MCF 10A (cell line): ENCODE measurements at regions of chr17 and their contacts with region 1.

Region 1: GRCh38 chr17:4852567-4853207 is 19.5 kb downstream of the MINK1 start:
- DNase-seq: peak; percentile 63
- H3K4me3 Mint-ChIP-seq: peak overlapping the region; percentile 2
- H3K27ac Mint-ChIP-seq: peak overlapping the region; percentile 89
- H3K4me1 Mint-ChIP-seq: peaks cover 75% of the 10 kb centered on the region
- H3K27me3 Mint-ChIP-seq: no peaks in the 10 kb centered on the region
- CTCF ChIP-seq: no peak

Region 2: DNA sequence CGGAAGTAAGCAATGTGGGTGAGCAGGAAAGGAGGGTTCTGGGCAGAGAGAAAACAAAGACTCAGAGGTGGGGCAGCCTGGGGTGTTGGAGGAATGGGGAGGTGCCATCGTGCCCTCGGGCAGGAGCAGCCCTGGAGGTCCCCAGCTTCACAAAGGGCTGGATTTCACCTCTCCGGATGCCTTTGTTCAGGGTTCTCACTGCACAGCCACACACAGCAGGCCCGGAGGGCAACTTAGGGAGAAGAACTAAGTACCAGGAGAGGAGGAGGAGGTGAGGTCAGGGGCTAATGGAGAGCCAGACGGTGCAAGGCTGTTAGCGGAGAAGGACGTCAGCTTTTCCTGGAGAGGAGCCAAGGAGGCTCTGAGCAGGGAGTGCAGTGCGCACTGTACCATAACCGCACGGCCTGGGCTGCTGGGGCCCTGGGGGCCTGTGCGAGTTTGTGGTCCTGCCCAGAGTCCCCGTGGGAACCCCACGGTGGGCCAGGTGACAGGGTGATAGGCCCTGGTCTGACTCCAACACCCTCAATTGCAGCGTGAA is 132.9 kb before region 1 on chr17:
- CTCF ChIA-PET with region 1: no interaction called
- POLR2A ChIA-PET with region 1: no interaction called
- intact Hi-C with region 1: no loop called
- DNase-seq: no peak
- H3K4me3 Mint-ChIP-seq: no peak overlapping the region
- H3K27ac Mint-ChIP-seq: no peak overlapping the region
- H3K4me1 Mint-ChIP-seq: peaks cover 14% of the 10 kb centered on the region
- H3K27me3 Mint-ChIP-seq: no peaks in the 10 kb centered on the region
- CTCF ChIP-seq: no peak

Region 3: GRCh38 chr17:4796553-4796921 is 56.1 kb before region 1 on chr17:
- CTCF ChIA-PET with region 1: interaction called, 3 read pairs
- POLR2A ChIA-PET with region 1: interaction called, 14 read pairs
- intact Hi-C with region 1: no loop called
- DNase-seq: peak; percentile 20
- H3K4me3 Mint-ChIP-seq: peak overlapping the region; percentile 96
- H3K27ac Mint-ChIP-seq: peak overlapping the region; percentile 88
- H3K4me1 Mint-ChIP-seq: peaks cover 4% of the 10 kb centered on the region
- H3K27me3 Mint-ChIP-seq: no peaks in the 10 kb centered on the region
- CTCF ChIP-seq: no peak

Region 4: DNA sequence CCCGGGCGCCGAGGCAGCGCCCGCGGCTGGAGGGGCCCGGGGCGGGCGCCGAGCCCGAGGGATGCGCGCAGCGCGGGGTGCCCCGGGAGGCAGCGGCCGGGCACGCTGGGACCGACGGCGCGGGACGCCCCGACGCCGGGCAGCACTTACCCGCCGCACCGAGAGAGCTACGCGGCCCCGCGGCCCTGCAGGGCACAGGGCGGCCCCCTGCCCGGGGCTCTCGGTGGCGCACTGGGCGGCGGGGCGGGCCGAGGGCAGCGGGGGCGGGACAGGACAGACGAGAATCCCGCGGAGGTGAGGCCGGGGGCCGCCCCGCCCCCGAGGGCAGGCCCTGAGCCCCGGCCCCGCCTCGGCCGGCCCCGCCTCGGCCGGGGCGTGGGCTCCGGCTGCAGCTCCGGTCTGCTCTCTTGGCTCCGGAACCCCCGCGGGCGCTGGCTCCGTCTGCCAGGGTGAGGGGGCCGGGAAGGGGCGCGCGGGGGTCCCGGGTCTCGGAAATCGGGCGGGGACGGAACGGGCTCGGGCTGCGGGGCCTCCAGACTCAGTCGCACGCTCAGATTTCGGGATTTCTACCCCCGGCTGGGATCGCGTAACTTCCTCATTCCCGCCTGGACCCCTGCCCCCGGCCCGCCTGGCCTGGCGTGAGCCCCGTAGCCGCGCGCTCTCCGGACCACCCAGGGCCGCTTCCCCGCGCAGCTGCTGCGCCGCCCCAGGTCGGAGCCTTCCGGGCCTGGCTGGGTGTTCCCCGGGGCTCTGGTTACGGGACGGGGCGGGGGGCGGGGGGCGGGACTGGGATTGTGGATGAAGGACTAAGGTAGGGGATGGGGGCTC is 45.7 kb before region 1 on chr17 and contains the start of gene PLD2:
- CTCF ChIA-PET with region 1: no interaction called
- POLR2A ChIA-PET with region 1: interaction called, 17 read pairs
- intact Hi-C with region 1: no loop called
- DNase-seq: peak; percentile 83
- H3K4me3 Mint-ChIP-seq: peak within 1 kb of the TSS; percentile 77
- H3K27ac Mint-ChIP-seq: no peak within 1 kb of the TSS
- H3K4me1 Mint-ChIP-seq: peaks cover 17% of the 10 kb centered on the region
- H3K27me3 Mint-ChIP-seq: no peaks in the 10 kb centered on the region
- CTCF ChIP-seq: no peak
- total RNA-seq, gene PLD2: 27.6 and 31.7 TPM in 2 replicates

Region 5: GRCh38 chr17:4870855-4871254 is 18.2 kb after region 1 on chr17:
- CTCF ChIA-PET with region 1: interaction called, 5 read pairs
- POLR2A ChIA-PET with region 1: interaction called, 23 read pairs
- intact Hi-C with region 1: no loop called
- DNase-seq: no peak
- H3K4me3 Mint-ChIP-seq: no peak overlapping the region
- H3K27ac Mint-ChIP-seq: peak overlapping the region; percentile 56
- H3K4me1 Mint-ChIP-seq: peaks cover 20% of the 10 kb centered on the region
- H3K27me3 Mint-ChIP-seq: no peaks in the 10 kb centered on the region
- CTCF ChIP-seq: no peak

Region 6: GRCh38 chr17:5719976-5720375 is 867.3 kb after region 1 on chr17:
- CTCF ChIA-PET with region 1: no interaction called
- POLR2A ChIA-PET with region 1: no interaction called
- intact Hi-C with region 1: no loop called
- DNase-seq: no peak
- H3K4me3 Mint-ChIP-seq: no peak overlapping the region
- H3K27ac Mint-ChIP-seq: no peak overlapping the region
- H3K4me1 Mint-ChIP-seq: peaks cover 21% of the 10 kb centered on the region
- H3K27me3 Mint-ChIP-seq: peaks cover 13% of the 10 kb centered on the region
- CTCF ChIP-seq: no peak